Astrocyte of the cerebellum (primary cell): ENCODE measurements at regions of chr6 and their contacts with region 1.

Region 1: DNA sequence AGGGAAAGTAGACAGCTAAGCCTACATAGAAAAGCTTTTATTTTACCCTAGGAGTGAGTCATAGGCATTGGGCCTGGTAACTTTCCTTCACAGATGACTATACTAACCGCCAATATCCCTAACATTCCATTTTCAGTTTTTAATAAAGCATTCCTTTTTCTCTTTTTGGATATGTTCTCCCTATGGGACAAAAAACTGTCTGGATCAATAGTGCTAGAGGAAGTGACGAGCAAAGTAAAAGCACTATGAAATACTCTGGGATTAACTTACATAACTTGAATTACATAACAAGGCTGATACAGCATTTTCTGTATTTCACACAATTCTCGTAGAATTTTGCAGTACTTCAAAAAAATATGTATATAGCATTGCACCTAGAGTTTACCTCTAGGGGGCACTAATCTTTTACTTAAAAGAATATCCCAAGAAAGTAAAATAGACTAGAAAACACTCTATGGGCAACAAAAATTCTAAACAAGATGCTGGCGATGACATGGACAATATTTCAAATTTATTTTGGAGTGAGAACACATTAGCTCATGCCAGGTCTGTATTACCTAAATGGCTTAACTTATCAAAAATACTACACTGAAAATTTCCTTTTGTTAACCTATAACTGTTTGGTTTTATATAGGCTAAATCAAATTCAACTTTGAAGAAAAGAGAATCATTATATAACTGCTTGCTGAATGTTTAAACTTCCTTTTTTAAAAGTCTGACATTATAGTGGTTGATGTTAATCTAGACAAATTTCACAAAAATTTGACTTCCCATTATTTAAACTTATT is 66.3 kb upstream of the DST start:
- DNase-seq: peak; percentile 57
- H3K4me3 ChIP-seq: no peak overlapping the region
- CTCF ChIP-seq: peak; percentile 12

Region 2: GRCh38 chr6:56757588-56757984 is 48.6 kb after region 1 on chr6:
- in situ Hi-C with region 1: no loop called
- DNase-seq: no peak
- H3K4me3 ChIP-seq: no peak overlapping the region
- CTCF ChIP-seq: peak; percentile 28

Region 3: DNA sequence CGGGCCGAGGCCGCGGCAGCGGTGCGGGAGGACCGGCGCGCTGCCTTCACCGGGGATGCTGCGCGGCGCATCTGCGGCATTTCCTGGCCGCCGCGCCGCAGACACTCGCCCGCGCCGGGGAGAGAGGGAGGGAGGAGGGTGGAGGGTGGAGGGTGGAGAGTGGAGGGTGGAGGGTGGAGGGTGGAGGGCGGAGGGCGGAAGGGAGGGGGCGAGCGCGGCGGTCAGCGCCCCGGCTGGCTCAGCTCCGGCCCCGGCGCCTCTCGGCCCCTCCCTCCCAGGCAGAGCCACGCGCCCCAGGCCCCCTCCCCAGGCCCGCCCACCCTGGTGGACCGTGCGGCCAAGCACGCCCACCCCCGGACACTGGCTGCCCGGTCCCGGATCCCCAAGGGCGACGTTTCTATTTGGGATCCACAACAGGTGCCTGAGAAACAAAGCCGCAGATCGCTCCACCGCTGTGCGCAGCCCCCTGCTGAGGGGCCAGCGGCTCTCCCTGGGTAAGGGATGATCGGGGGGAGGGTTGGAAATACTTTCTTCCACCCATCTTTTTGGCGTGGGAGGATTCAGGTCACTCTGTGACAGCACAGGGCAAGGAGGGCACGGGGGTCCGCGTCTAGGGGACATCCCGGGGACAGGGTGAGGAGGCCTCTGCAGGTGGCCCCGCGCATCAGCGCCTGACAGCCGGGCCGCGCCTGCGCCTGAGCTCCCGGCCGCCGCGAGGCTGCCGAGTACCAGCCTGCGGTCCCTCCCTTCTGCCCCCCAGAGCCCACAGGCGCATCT is 134.8 kb after region 1 on chr6:
- in situ Hi-C with region 1: loop called (anchors 25 kb)
- DNase-seq: no peak
- H3K4me3 ChIP-seq: peak overlapping the region; percentile 69
- CTCF ChIP-seq: peak; percentile 57